Cardiac septum (tissue), 1 donor: ENCODE measurements at regions of chr9 and their contacts with region 1.

Region 1: DNA sequence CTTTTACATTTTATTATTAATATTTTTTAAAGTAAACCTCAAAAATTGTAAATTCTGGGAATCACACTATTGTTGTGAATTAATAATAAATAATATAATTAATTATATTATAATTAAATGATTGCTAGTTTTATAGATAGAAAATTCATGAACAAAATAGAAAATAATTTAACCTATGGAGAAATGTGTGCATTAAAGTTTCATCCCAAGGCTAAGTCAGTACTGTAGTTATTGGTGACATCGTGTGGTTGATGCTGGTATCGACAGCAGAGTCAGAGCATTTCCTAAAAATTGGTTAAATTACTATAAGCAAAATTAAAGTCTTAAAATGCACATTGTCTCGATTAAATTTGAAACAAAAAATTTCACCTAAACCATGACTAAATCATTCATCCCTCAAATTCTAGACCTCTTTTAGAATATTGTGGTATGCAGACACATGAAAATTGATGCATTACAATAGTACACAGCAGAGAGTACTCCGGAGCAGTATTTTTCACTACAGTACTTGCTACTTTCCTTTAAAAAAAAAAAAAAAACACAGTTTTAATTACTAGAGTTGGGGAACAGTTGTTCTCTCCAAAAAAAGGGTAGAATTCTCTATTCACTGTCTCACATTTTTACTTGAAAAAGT is 73.9 kb downstream of the RORB start:
- DNase-seq: no peak

Region 2: DNA sequence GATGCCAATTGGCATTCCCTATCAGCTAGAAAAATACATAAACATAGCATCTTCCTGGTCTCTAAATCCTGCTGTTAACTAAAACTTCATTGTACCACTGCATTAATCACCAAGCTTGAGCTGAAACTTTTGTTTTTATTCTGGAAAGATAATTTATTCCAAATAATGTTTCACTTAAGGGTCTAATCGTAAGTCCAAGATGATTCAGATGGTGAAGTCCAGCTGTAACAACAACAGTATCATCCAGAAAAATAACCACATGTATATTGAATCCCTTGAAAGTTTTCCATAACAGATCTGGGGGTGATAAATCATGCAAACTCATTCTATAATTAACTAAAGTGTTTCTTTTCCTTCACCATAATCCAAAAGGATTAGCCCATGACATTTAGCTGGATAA is 50.0 kb before region 1 on chr9:
- intact Hi-C with region 1: loop called (anchors 10 kb)
- DNase-seq: no peak

Region 3: GRCh38 chr9:74551266-74551665 is 19.7 kb before region 1 on chr9:
- intact Hi-C with region 1: no loop called
- DNase-seq: no peak